ENCODE measurements at regions of chr17 and their contacts with region 1.

Region 1: DNA sequence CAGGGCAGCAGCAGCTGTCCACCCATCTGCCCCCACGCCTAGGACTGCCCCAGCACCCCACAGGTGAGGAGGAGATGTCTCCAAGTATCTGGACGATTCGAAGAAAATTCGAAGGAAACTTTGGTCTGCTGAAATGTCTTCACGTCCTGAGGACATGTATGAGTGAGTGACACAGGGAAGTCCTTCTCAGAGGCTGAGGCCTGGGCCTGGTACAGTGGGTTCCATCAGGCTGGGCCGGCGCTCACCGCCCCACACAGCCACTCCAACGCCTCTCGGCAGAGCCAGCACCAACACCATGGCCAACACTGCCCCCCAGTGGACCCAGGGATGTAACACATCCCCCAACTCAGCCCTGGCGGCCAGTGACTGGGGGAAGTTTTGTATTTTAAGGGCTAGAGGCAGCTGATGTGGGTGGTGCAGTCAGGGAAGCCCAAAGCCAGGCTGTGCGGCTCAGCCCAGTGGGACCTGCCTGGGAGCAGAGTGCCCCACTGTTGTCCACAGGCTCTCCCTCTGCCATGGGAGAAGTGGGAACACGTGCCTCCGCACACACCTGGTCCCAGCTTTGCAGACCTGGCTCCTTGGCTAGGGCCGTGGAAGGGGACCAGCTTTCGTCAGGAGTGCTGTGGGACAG is 55.8 kb upstream of the FASN start:
- DNase-seq: peak; percentile 85 to 92
- ATAC-seq: peak; percentile 90
- H3K4me3 ChIP-seq: no peak overlapping the region
- H3K27ac ChIP-seq: no peak overlapping the region
- H3K4me1 ChIP-seq: no peaks in the 10 kb centered on the region
- H3K27me3 ChIP-seq: no peaks in the 10 kb centered on the region

Region 2: DNA sequence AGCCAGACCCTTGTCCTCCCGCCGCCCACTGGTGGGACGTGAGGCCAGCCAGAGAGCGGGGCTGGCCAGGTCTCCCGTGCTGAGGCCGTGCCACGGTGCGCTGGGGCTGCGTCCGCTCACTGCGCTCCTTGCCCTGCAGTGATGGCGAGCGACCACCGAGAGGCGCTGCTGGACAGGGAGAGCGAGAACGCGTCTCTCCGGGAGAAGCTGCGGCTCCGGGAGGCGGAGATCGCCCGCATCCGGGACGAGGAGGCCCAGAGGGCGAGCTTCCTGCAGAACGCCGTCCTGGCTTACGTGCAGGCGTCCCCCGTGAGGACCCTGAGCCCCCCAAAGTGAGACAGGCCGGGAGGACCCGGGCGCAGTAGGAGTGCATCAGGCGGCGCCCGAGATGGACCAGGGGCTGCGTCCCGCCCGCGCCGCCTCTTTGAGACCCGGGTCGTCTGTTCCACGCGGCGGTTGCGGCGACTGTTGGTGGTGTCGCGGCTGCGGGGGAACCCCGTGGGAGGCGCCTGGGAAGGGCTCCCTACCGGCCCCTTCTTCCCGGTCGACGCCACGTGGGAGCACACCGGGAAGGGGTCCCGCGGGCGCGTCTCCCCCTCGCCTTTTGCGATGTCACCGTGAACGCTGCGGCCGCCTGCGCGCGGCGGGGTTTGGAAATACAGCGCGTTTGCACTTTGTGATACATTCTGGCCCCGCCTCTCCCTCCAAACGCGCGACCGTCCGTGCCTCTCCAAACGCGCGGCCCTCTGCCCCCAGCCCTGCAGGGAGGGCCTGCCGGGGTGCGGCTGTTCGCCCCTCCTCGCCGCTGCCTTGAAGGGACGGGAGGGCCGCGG is 123.2 kb before region 1 on chr17:
- intact Hi-C with region 1: loop called (anchors 1 to 2 kb)
- DNase-seq: peak; percentile 89 to 94
- ATAC-seq: peak; percentile 89
- H3K4me3 ChIP-seq: peak overlapping the region in 1 of 2 donors; percentile 10
- H3K27ac ChIP-seq: no peak overlapping the region
- H3K4me1 ChIP-seq: no peaks in the 10 kb centered on the region
- H3K27me3 ChIP-seq: no peaks in the 10 kb centered on the region

Region 3: GRCh38 chr17:82120148-82120547 is 33.7 kb before region 1 on chr17:
- intact Hi-C with region 1: no loop called
- DNase-seq: no peak
- ATAC-seq: no peak
- H3K4me3 ChIP-seq: no peak overlapping the region
- H3K27ac ChIP-seq: no peak overlapping the region
- H3K4me1 ChIP-seq: no peaks in the 10 kb centered on the region
- H3K27me3 ChIP-seq: no peaks in the 10 kb centered on the region

Region 4: DNA sequence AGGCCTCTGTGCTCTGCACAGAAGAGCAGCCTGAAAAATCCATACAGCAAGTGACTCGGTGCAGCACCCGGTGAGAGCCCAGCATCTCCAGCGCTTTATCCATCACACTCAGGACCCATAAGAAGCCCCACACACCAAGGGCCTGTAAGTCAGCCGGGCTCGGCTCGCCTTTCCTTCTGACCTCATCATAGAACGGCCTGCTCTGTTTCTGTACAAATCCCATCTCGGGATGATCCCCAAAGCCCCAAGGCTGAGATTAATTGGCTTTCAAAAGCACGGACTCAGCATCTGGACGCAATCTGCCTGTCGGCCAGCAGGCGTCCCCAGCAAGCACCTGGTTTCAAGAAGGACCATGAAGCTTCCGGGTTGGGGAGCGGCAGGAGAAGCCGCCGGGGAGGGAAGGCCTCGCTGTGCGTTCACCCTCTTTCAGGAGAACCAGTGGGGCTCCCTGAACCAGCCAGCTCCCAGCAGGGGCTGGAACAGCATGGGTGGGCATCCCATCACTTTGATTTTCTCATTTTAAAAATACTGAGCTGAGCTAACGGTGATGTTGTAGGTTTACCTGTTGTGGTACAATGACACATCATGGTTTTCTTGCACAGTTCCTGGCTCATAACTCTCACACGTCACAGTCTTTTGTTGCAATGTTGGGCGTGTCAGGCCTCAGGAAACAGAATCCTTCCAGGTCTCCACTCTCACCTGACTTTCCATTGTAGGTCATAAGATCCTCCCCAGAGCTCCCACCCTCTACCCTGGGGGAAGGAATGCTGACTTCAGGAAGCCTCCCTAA is 52.1 kb after region 1 on chr17:
- intact Hi-C with region 1: no loop called
- DNase-seq: peak; percentile 90 to 93
- ATAC-seq: peak; percentile 89
- H3K4me3 ChIP-seq: no peak overlapping the region
- H3K27ac ChIP-seq: no peak overlapping the region
- H3K4me1 ChIP-seq: no peaks in the 10 kb centered on the region
- H3K27me3 ChIP-seq: no peaks in the 10 kb centered on the region

Region 5: DNA sequence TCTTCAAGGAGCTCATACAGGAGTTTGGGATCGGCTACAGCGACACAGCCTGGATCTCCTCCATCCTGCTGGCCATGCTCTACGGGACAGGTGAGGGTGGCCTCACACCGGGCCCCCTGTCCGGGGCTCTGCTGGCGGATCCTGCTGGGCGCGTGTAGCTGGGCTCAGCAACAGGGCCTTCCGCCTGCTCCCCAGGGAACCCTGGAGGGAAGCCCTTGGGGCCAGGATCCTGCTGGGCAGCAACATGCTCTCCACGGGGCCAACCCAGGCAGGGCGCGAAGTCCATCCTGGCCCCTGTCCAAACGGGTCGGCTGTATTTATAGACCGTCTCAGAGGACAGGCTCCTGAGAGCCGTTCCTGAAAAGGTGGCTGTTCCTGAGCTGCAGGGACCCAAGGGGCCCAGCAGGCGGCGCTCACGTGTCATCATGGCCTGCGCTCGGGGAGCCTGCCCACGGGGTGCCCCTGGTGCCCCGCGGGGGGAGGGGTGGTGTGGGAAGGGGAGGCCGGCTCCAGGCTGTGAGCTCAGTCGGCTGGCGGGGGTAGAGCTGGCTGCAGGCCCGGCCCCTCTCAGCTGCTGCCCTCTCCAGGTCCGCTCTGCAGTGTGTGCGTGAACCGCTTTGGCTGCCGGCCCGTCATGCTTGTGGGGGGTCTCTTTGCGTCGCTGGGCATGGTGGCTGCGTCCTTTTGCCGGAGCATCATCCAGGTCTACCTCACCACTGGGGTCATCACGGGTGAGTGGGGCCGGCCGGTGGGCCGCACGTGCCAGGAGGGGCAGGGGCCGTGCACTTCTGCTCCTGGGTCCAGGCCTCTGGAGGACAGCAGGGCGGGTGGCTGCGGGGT is 82.5 kb after region 1 on chr17:
- intact Hi-C with region 1: no loop called
- DNase-seq: peak; percentile 62 to 89
- ATAC-seq: peak; percentile 34
- H3K4me3 ChIP-seq: no peak overlapping the region
- H3K27ac ChIP-seq: no peak overlapping the region
- H3K4me1 ChIP-seq: no peaks in the 10 kb centered on the region
- H3K27me3 ChIP-seq: no peaks in the 10 kb centered on the region

Measured in aorta (tissue), 5 donors.